Sigmoid colon (tissue), 7 donors: ENCODE measurements at regions of chr11 and their contacts with region 1.

Region 1: GRCh38 chr11:78645226-78646202 is 70.8 kb upstream of the NARS2 start:
- DNase-seq: no peak
- H3K4me3 ChIP-seq: no peak overlapping the region
- H3K27ac ChIP-seq: no peak overlapping the region
- H3K4me1 ChIP-seq: no peaks in the 10 kb centered on the region
- H3K27me3 ChIP-seq: no peaks in the 10 kb centered on the region
- CTCF ChIP-seq: peak; percentile 84 to 99 (median 93)
- EP300 ChIP-seq: no peak
- POLR2A ChIP-seq: no peak

Region 2: GRCh38 chr11:78332174-78332866 is 313.2 kb before region 1 on chr11:
- intact Hi-C with region 1: no loop called
- DNase-seq: no peak
- H3K4me3 ChIP-seq: no peak overlapping the region
- H3K27ac ChIP-seq: no peak overlapping the region
- H3K4me1 ChIP-seq: peaks cover 0 to 13% (median 0%) of the 10 kb centered on the region in 4 donors
- H3K27me3 ChIP-seq: no peaks in the 10 kb centered on the region
- CTCF ChIP-seq: no peak
- EP300 ChIP-seq: no peak
- POLR2A ChIP-seq: no peak

Region 3: DNA sequence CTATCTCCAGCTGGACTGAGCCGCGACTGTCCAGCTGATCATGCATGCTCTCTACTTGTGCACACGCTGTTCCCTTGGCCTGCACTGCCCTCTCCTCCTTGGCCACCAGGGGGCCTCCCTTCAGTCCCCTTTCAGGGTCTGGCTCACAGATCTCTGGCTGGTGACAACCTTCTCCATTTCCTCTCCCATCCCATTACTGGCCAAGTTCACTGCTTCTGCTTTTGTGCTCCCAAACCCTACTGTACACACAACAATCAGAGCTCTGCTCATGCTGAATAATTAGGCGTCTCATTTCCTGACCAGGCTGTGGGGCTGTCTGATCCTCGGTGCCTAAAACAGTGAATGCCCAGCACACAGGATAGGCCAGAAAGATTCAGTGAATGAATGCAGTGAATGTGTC is 153.1 kb after region 1 on chr11:
- intact Hi-C with region 1: loop called (anchors 10 kb)
- DNase-seq: peak; percentile 88
- H3K4me3 ChIP-seq: no peak overlapping the region
- H3K27ac ChIP-seq: peak overlapping the region in 2 of 4 donors; percentile 18 to 34
- H3K4me1 ChIP-seq: peaks cover 0 to 49% (median 45%) of the 10 kb centered on the region in 4 donors
- H3K27me3 ChIP-seq: no peaks in the 10 kb centered on the region
- CTCF ChIP-seq: peak; percentile 70 to 82 (median 73)
- EP300 ChIP-seq: no peak
- POLR2A ChIP-seq: no peak

Region 4: DNA sequence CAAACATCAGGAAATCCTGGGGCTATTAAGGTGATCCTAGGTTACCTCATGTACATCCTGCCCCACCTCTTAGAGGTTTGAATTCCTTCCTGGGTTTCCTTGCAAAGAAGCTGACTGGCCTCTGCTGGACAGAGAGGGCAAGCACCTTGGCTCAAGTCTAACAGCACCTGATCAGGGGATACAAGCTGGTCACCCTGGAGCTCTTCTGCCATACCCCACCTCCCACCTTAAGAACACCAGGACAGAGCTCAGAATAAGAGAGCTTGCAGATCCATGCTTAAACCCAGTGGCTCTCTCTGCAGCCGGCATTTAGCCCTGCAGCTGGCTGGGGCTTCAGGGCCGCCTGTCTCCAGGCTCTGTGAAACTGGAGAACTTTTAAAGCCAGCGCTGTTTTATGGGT is 315.7 kb after region 1 on chr11:
- intact Hi-C with region 1: loop called (anchors 5 kb)
- DNase-seq: no peak
- H3K4me3 ChIP-seq: no peak overlapping the region
- H3K27ac ChIP-seq: no peak overlapping the region
- H3K4me1 ChIP-seq: peaks cover 0 to 13% (median 10%) of the 10 kb centered on the region in 4 donors
- H3K27me3 ChIP-seq: peaks cover 0 to 14% (median 0%) of the 10 kb centered on the region in 3 donors
- CTCF ChIP-seq: peak in 3 of 4 experiments; percentile 33 to 43 (median 40)
- EP300 ChIP-seq: no peak
- POLR2A ChIP-seq: no peak

Region 5: DNA sequence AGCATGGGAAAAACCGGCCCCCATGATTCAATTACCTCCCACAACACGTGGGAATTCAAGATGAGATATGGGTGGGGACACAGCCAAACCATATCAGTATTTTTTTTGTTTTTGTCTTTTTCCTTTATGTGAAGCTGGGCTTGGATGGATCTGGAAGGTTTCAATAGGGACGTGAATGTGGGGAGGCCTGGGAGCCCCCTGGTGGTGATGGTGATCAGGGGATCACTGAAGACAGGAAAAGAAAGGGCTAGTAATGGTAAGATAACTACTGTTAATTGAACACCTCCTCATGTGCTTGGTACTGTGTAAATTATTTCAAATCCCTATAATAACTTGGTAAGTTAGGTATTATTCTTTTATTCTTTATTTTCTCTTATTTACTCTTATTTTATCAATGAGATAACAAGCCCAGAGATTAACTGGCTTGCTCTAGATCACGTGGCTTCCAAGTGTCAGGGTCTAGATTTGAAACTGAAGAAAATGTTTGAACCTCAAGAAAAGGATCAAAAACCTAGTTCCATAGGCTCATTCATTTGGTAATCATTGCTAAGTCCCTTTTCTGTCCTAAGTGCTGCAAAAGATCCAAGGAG is 431.1 kb after region 1 on chr11:
- intact Hi-C with region 1: loop called (anchors 5 kb)
- DNase-seq: no peak
- H3K4me3 ChIP-seq: no peak overlapping the region
- H3K27ac ChIP-seq: no peak overlapping the region
- H3K4me1 ChIP-seq: peaks cover 3 to 29% (median 25%) of the 10 kb centered on the region in 4 donors
- H3K27me3 ChIP-seq: no peaks in the 10 kb centered on the region
- CTCF ChIP-seq: peak; percentile 15 to 60 (median 44)
- EP300 ChIP-seq: no peak
- POLR2A ChIP-seq: no peak

Region 6: GRCh38 chr11:79100093-79100910 is 454.8 kb after region 1 on chr11:
- intact Hi-C with region 1: loop called (anchors 2 kb)
- DNase-seq: no peak
- H3K4me3 ChIP-seq: no peak overlapping the region
- H3K27ac ChIP-seq: no peak overlapping the region
- H3K4me1 ChIP-seq: peaks cover 0 to 15% (median 5%) of the 10 kb centered on the region in 4 donors
- H3K27me3 ChIP-seq: no peaks in the 10 kb centered on the region
- CTCF ChIP-seq: peak; percentile 24 to 74 (median 72)
- EP300 ChIP-seq: no peak
- POLR2A ChIP-seq: no peak

Region 7: DNA sequence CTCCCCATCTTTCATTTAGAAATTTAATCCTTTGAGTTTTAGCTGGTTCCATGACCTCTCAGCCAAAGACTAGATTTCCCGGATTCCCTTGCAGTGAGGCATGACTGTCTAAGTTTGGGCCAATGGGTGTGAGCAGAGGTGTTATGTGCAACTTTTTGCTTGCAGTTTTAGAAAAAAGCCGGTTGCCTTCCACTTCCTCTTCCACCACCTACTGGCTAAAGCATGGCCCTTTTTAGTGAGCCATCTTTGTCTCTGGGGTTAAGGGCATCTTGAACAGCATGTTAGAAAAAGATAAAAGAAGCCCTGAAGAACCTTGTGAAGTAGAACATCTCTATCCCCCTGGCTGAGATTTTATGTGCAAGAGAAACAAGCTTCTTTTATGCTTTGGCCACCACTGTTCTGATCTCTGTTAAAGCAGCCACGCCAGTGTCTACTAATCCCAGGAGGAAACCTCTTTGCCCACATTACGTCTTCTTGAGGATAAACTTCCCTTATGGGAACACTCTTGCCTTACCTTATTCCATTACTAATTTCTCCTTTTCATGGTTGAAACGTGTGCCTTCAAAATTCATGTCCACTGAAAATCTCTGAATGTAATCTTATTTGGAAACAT is 515.4 kb after region 1 on chr11:
- intact Hi-C with region 1: loop called (anchors 5 kb)
- DNase-seq: no peak
- H3K4me3 ChIP-seq: no peak overlapping the region
- H3K27ac ChIP-seq: no peak overlapping the region
- H3K4me1 ChIP-seq: no peaks in the 10 kb centered on the region
- H3K27me3 ChIP-seq: no peaks in the 10 kb centered on the region
- CTCF ChIP-seq: peak in 2 of 4 experiments; percentile 28 to 30
- EP300 ChIP-seq: no peak
- POLR2A ChIP-seq: no peak

Region 8: DNA sequence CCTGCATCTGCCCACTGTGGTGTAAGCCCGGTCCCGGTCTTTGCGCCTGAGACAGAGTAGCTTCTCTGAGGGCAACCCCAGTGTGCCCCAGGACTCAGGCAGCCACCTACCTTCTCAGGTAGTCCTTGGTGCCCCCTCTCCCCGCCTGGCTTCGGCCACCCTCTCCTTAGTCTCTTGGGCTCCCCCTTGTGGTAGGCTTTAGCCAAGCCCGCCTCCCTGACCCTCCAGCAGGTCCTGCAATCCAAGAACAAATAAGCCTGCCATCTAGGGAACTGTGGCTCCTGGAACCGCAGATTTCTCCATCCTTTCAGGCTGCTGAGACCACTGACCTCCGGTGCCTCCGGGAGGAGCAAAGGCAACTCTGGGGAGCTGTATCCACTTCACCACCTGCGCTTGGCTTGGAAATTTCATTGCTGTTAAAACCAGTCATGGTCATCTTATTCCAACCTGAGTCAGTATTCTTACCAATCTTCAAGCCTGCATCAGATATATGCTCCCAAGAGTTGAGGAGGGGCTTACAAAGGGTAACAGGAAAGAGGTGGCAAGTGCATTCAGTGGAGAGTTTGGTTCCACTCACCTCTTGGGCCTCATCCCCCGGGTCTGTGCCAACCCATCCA is 848.1 kb after region 1 on chr11:
- intact Hi-C with region 1: loop called (anchors 1 kb)
- DNase-seq: peak; percentile 82
- H3K4me3 ChIP-seq: no peak overlapping the region
- H3K27ac ChIP-seq: no peak overlapping the region
- H3K4me1 ChIP-seq: no peaks in the 10 kb centered on the region
- H3K27me3 ChIP-seq: no peaks in the 10 kb centered on the region
- CTCF ChIP-seq: peak in 3 of 4 experiments; percentile 45 to 83 (median 67)
- EP300 ChIP-seq: no peak
- POLR2A ChIP-seq: no peak